Transverse colon (tissue), 4 donors: ENCODE measurements at regions of chr10 and their contacts with region 1.

Region 1: GRCh38 chr10:103481974-103482531 is 3.0 kb upstream of the CALHM3 start:
- DNase-seq: no peak
- H3K4me3 ChIP-seq: no peak overlapping the region
- H3K27ac ChIP-seq: no peak overlapping the region
- H3K4me1 ChIP-seq: peaks cover 0 to 14% (median 4%) of the 10 kb centered on the region in 4 donors
- H3K27me3 ChIP-seq: no peaks in the 10 kb centered on the region
- CTCF ChIP-seq: peak; percentile 52 to 62 (median 54)
- EP300 ChIP-seq: no peak
- POLR2A ChIP-seq: no peak

Region 2: DNA sequence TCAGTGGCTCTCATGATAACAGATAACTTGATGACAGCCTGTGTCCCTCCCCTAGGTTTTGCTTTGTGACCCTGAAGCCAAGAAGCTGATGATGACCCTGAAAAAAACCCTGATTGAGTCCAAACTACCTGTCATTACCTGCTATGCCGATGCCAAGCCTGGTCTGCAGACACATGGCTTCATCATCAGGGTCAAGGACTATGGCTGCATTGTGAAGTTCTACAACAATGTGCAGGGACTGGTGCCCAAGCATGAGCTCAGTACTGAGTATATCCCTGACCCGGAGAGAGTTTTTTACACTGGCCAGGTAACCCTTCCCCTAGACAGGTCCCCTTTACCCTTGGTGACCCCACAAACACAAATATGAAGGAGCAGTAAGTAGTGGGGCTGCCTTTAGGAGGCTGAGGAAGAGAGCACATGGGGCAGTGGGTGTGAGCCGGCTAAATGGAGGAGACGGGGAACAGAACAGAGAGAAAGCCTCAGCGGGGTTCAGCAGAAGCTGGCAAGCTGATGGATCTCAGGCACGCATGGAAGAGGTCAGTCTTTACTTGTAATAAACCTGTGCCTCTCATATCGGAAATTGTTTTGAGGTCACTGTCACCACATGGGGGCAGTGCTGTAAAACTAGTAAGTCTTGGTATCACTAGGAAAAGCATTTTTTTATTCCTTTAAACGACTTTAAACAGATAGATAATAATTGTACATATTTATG is 65.5 kb before region 1 on chr10:
- in situ Hi-C with region 1: loop called in 3 of 4 experiments (anchors 5 to 10 kb)
- intact Hi-C with region 1: loop called (anchors 2 kb)
- DNase-seq: peak; percentile 67
- H3K4me3 ChIP-seq: no peak overlapping the region
- H3K27ac ChIP-seq: no peak overlapping the region
- H3K4me1 ChIP-seq: no peaks in the 10 kb centered on the region
- H3K27me3 ChIP-seq: no peaks in the 10 kb centered on the region
- CTCF ChIP-seq: peak; percentile 49 to 65 (median 60)
- EP300 ChIP-seq: no peak
- POLR2A ChIP-seq: no peak

Region 3: DNA sequence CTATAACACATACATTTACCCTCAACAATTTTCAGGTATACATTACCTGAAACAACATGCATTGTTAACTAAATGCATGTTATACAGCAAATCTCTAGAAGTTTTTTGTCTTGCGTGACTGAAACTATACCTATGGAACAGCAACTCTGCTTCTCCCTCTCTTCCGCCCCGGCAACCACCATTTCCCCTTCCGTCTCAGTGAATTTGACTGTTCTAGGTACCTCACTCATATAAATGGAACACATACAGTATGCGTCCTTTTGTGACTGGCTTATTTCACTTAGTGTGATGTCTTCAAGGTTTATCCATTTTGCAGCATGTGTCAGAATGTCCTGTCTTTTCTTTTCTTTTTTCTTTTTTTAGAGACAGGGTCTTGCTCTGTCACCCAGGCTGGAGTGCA is 52.4 kb before region 1 on chr10:
- in situ Hi-C with region 1: loop called in 1 of 4 experiments (anchors 10 kb)
- intact Hi-C with region 1: no loop called
- DNase-seq: no peak
- H3K4me3 ChIP-seq: no peak overlapping the region
- H3K27ac ChIP-seq: no peak overlapping the region
- H3K4me1 ChIP-seq: no peaks in the 10 kb centered on the region
- H3K27me3 ChIP-seq: no peaks in the 10 kb centered on the region
- CTCF ChIP-seq: no peak
- EP300 ChIP-seq: no peak
- POLR2A ChIP-seq: no peak

Region 4: GRCh38 chr10:103493362-103493892 is 11.4 kb after region 1 on chr10 and contains the start of gene NEURL1:
- in situ Hi-C with region 1: no loop called
- intact Hi-C with region 1: no loop called
- DNase-seq: no peak
- H3K4me3 ChIP-seq: peak within 1 kb of the TSS; percentile 35 to 64 (median 54)
- H3K27ac ChIP-seq: peak within 1 kb of the TSS in 1 of 4 donors; percentile 32
- H3K4me1 ChIP-seq: peaks cover 5 to 24% (median 12%) of the 10 kb centered on the region in 4 donors
- H3K27me3 ChIP-seq: peaks cover 42% of the 10 kb centered on the region
- CTCF ChIP-seq: no peak
- EP300 ChIP-seq: no peak
- POLR2A ChIP-seq: no peak
- total RNA-seq, gene NEURL1: 36.7 to 177 (median 55.8) TPM

Region 5: DNA sequence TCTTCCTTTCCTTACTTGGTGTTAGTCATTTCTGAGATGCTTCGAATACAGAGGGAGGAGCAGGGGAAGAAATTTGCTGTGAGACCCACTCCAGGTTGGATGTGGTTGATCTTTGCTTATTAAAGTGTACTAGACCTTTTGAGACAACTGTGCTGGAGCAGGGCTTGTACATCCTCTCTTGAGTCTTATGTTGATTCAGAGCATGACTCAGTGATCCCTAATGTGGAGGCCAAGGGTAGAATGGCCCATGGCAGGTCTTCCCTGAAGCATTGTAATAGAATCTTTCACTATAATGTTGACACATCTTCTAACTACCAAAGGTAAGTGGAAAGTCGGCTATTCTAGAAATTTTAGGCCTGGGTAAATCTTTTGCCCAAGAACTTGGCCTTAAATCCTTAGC is 622.9 kb after region 1 on chr10:
- in situ Hi-C with region 1: no loop called
- intact Hi-C with region 1: no loop called
- DNase-seq: no peak
- H3K4me3 ChIP-seq: no peak overlapping the region
- H3K27ac ChIP-seq: no peak overlapping the region
- H3K4me1 ChIP-seq: peaks cover 0 to 2% (median 0%) of the 10 kb centered on the region in 4 donors
- H3K27me3 ChIP-seq: no peaks in the 10 kb centered on the region
- CTCF ChIP-seq: no peak
- EP300 ChIP-seq: no peak
- POLR2A ChIP-seq: no peak